Activated T-helper 2 cell treated with anti-CD3 and anti-CD28 coated beads, Interferon-gamma antibody, Interleukin-2, Interleukin-4, amounts not matched to agents 10 μg/mL and 5 μg/mL and 100 μg/mL, durations not matched to agents 14 hours and 24 hours and 36 hours (primary cell): ENCODE measurements at regions of chr9 and their contacts with region 1.

Region 1: DNA sequence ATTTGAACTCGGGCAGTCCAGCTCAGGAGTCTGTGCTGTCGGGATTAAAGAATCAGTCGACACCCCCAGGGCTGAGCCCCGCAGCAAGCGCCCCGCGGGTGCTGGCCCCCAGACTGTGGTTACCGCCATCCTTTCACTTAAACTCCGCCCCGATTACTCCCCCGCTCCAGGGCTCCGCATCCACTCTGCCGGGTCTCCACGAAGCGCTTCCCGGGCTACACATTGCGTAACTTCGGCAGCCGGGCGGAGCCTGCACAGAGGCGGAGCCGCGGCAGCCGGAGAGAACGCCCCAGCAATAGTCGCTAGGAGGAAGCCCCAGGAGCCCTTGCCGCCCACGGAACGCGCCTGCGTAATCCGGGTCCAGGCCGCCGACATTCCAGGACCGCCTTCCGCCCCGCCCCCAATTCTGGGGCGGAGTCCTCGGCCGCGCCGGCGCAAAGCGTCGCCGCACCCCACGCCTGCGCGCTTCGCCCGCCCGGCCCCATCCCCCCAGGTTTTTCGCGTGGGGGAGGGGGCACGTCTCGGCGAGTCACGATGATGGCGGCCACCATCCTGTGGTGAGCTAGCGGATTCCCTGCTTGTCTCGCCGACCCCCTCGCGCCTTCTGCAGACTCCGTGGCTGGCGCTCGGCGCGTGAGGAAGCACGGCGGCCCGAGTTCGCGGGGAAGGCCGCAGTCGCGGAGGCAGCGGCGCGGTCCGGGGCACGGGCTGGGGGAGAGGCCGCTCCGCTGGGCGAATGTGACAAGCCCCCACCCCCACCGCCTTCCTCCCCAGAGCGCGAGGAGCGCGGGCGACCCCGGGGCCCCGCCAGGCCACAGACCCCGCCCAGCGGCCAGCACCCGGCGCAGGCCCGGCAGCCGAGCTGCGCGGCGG is at the start of gene RAD23B:
- DNase-seq: peak; percentile 96
- H3K4me3 Mint-ChIP-seq: peak within 1 kb of the TSS; percentile 97
- H3K27ac Mint-ChIP-seq: peak within 1 kb of the TSS; percentile 92
- H3K4me1 Mint-ChIP-seq: peaks cover 44% of the 10 kb centered on the region
- H3K27me3 Mint-ChIP-seq: no peaks in the 10 kb centered on the region
- total RNA-seq, gene RAD23B: 142 and 145 TPM in 2 replicates

Region 2: GRCh38 chr9:107243751-107244150 is 39.2 kb before region 1 on chr9:
- intact Hi-C with region 1: loop called (anchors 2 kb)
- DNase-seq: no peak
- H3K4me3 Mint-ChIP-seq: no peak overlapping the region
- H3K27ac Mint-ChIP-seq: peak overlapping the region; percentile 68
- H3K4me1 Mint-ChIP-seq: peaks cover 21% of the 10 kb centered on the region
- H3K27me3 Mint-ChIP-seq: no peaks in the 10 kb centered on the region

Region 3: DNA sequence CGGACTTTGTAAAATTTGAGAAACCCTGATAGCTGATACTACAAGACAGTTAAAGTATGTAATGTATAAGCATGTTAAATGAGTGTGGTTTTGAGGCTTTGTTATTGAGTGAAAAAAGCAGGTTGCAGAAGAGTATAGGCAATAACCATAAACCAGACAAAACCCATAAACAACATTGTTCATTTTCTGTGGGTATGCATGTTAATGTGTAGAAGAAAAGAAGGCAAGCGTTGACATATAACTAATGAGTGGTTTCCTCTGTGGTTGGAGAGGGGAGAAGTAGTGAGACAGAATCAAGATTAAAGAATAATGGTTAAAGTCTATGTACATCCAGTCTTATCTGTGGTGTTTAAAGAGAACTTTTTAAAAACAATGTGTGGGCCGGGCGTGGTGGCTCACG is 26.3 kb after region 1 on chr9:
- intact Hi-C with region 1: loop called (anchors 1 kb)
- DNase-seq: no peak
- H3K4me3 Mint-ChIP-seq: peak overlapping the region; percentile 13
- H3K27ac Mint-ChIP-seq: peak overlapping the region; percentile 44
- H3K4me1 Mint-ChIP-seq: peaks cover 52% of the 10 kb centered on the region
- H3K27me3 Mint-ChIP-seq: no peaks in the 10 kb centered on the region

Region 4: GRCh38 chr9:107323836-107324585 is 41.0 kb after region 1 on chr9:
- intact Hi-C with region 1: loop called (anchors 5 kb)
- DNase-seq: no peak
- H3K4me3 Mint-ChIP-seq: no peak overlapping the region
- H3K27ac Mint-ChIP-seq: no peak overlapping the region
- H3K4me1 Mint-ChIP-seq: peaks cover 28% of the 10 kb centered on the region
- H3K27me3 Mint-ChIP-seq: no peaks in the 10 kb centered on the region

Region 5: DNA sequence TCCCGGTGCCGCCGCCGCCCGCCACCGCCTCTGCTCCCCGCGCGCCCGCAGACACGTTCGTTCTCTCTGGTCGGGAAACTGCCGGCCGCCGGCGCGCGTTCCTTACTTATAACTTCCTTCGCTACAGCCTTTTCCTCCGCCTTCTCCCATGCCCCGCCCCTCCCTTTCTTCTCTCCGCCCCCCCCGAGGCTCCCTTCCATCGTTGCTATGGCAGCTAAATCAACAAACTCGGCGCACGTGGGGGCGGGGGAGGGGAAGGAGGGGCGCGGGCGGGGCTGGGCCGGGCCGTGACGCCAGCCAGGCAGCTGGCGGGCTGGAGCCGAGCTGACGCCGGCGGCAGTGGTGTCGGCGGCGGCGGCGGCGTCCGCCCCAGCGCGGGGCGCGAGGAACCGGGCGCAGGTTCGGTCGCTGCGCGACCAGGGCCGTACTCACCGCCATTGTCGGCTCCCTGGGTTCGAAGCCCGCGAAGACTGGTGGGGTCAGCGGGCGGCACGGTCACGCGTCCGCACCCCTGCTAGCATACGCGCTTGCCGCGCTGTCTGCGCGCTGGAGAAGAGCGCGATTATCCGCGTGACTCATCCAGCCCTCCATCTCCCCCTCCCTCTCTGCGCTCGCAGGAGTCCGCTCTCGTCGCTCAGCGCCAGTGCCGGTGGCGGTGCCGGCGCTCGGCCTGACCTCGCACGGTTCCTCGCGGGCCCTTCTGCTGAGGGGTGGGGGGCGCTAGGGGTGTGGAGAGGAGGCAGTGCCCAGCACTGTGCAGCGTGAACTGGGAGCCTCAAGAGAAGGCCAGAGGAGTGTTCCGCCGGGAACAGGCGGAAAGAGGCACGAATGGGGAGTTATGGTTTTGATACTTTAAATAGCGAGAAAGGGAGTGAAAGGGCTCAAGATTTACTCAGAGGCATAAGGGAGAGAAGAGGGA is 207.0 kb after region 1 on chr9 and contains the start of gene KLF4:
- intact Hi-C with region 1: loop called (anchors 5 kb)
- DNase-seq: peak; percentile 68
- H3K4me3 Mint-ChIP-seq: peak within 1 kb of the TSS; percentile 71
- H3K27ac Mint-ChIP-seq: no peak within 1 kb of the TSS
- H3K4me1 Mint-ChIP-seq: peaks cover 5% of the 10 kb centered on the region
- H3K27me3 Mint-ChIP-seq: peaks cover 64% of the 10 kb centered on the region
- total RNA-seq, gene KLF4: 0.52 and 1.4 TPM in 2 replicates

Region 6: GRCh38 chr9:109119439-109120203 is 1836.6 kb after region 1 on chr9 and contains the start of gene TMEM245:
- intact Hi-C with region 1: loop called (anchors 10 kb)
- DNase-seq: peak; percentile 93
- H3K4me3 Mint-ChIP-seq: peak within 1 kb of the TSS; percentile 84
- H3K27ac Mint-ChIP-seq: peak within 1 kb of the TSS; percentile 83
- H3K4me1 Mint-ChIP-seq: peaks cover 36% of the 10 kb centered on the region
- H3K27me3 Mint-ChIP-seq: no peaks in the 10 kb centered on the region
- total RNA-seq, gene TMEM245: 24.0 and 25.8 TPM in 2 replicates